Left lung (tissue), 14 donors: ENCODE measurements at regions of chr11 and their contacts with region 1.

Region 1: DNA sequence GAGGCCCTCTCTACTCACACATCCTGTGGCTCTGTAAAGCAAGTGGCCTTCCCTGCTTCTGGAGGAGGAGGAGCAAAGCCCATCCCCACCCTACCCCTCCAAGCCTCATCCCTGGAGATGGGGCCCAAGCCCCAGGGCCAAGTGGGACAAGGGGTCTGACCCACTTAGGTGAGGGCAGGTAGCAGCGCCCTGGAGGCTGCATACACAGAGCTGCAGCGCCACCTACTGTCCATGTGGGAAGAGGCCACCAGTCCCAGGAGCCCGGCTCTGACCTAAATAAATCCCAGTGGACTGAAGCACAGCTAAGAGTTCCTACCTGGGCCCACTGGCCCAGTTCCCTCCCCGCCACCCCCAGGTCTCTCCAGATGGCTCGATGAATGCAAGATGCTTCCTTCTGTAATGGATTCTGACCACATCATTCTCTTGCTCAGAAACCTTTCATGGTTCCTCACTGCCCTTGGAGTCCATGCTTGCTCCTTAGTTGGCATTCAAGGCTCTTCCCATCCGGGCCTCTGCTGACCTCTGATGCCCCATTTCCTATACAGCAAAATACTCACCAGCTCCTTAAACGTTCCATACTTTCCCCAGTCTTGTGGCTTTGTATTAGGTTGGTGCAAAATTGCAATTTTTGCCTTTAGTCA is 62.1 kb downstream of the THAP12 start:
- DNase-seq: peak; percentile 72 to 92 (median 84)
- ATAC-seq: peak; percentile 94
- H3K4me3 ChIP-seq: no peak overlapping the region
- H3K27ac ChIP-seq: no peak overlapping the region
- H3K4me1 ChIP-seq: peaks cover 0 to 15% of the 10 kb centered on the region in 2 donors
- H3K27me3 ChIP-seq: peaks cover 5 to 33% of the 10 kb centered on the region in 2 donors
- CTCF ChIP-seq: peak; percentile 89

Region 2: GRCh38 chr11:75907906-75908527 is 410.8 kb before region 1 on chr11:
- intact Hi-C with region 1: loop called in 1 of 2 experiments (anchors 10 kb)
- DNase-seq: no peak
- ATAC-seq: no peak
- H3K4me3 ChIP-seq: no peak overlapping the region
- H3K27ac ChIP-seq: no peak overlapping the region
- H3K4me1 ChIP-seq: peaks cover 0 to 12% of the 10 kb centered on the region in 2 donors
- H3K27me3 ChIP-seq: no peaks in the 10 kb centered on the region
- CTCF ChIP-seq: no peak

Region 3: DNA sequence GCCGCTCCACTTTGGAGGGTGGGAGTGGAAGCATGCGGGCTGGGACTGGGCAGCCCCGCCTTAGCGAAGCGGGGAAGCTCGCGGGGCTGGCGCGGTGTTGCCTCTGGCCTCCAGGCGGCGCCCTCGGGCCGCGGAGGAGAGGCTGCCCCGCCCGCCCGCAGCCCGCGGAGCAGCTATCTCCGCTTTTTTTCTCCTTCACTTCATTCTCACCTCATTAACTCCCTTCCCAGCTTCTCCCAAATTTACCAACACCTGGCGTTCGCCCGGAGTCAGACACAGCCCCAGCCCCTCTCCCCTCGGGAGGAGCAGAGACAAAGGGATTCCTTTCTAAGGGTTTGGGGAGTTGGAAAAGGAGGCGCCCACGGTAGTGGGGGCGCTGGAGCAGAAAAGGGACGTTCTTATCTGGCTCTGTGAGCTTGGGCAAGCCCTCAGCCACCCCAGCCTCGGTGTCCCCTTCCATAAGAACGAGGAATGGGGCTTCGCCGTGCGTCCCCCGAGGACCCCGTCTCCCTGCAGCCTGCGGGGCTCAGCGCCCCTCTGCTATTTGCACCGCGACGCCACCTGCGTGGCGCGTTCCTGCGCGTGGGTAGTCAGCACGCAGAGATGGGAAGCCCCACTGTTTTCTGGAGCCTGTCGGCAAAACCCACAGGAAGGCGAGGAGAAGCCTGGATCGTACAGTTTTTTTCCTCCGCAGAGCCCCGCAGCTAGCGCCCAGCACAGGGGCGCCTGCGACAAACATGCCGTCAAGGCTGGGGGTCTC is 111.0 kb before region 1 on chr11:
- intact Hi-C with region 1: loop called in 1 of 2 experiments (anchors 5 kb)
- DNase-seq: peak; percentile 82 to 96 (median 90)
- ATAC-seq: peak; percentile 86
- H3K4me3 ChIP-seq: peak overlapping the region; percentile 48 to 55
- H3K27ac ChIP-seq: no peak overlapping the region
- H3K4me1 ChIP-seq: peaks cover 23 to 59% of the 10 kb centered on the region in 2 donors
- H3K27me3 ChIP-seq: peaks cover 29 to 100% of the 10 kb centered on the region in 2 donors
- CTCF ChIP-seq: peak; percentile 97 to 98